ENCODE measurements at regions of chr9 and their contacts with region 1.

Region 1: DNA sequence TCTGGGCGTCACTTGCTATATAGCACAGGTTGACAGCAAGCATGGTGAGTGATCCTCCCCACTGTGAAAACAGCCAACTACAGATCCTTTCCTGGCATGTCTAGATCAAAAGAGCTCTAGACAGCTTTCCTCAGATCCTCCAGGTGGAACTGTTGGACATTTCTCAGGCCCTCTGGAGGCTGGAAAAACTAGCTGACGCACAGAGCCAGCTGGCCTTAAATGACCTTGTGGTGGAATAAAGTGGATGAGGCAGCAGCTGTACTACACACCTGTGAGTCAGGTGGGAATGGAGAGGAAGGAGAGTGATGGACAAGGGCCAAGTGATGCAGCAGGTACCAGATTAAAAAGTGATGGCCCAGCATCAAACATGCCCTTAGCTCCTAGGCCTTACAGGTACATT is 172.7 kb downstream of the TRIM32 start:
- DNase-seq: no peak

Region 2: DNA sequence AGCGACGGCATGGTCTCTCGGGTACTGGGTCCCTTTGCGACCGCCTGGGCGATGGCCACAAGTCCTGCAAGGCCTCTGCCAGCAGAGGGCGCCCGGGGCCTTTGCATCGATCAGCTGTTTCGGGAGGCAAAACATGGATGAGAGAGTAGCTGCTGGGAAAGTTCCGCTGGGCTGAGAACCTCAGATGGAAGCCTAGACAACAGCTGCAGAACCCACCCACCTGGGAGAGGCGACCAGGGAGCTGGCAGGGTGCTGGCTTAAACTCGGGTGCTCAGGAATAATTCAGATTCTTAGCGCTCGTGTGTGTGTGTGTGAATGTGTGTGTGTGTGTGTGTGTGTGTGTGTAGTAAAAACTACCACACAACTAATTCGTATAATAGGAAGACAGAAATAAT is 122.6 kb before region 1 on chr9:
- intact Hi-C with region 1: loop called (anchors 2 kb)
- DNase-seq: peak; percentile 79

Region 3: DNA sequence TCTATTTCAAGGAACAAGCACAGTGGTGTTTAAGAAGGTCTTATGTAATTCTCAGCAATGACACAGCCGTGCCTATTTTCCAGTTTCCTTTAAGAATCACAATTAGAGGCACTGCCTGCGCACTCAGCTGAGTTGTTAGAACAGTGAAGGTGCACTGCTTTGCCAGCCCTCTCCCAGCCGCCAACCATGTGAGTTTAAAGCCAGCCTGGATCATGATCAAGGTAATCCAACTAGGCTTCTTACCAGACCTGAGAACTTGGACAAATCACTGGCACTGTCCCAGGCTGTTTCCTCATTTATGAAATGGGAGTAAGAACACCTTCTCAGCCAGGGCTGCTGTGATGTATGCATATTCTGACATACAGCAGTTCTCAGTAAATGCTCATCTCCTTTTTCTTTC is 455.5 kb after region 1 on chr9:
- intact Hi-C with region 1: no loop called
- DNase-seq: no peak